ENCODE measurements at regions of chr6 and their contacts with region 1.

Region 1: DNA sequence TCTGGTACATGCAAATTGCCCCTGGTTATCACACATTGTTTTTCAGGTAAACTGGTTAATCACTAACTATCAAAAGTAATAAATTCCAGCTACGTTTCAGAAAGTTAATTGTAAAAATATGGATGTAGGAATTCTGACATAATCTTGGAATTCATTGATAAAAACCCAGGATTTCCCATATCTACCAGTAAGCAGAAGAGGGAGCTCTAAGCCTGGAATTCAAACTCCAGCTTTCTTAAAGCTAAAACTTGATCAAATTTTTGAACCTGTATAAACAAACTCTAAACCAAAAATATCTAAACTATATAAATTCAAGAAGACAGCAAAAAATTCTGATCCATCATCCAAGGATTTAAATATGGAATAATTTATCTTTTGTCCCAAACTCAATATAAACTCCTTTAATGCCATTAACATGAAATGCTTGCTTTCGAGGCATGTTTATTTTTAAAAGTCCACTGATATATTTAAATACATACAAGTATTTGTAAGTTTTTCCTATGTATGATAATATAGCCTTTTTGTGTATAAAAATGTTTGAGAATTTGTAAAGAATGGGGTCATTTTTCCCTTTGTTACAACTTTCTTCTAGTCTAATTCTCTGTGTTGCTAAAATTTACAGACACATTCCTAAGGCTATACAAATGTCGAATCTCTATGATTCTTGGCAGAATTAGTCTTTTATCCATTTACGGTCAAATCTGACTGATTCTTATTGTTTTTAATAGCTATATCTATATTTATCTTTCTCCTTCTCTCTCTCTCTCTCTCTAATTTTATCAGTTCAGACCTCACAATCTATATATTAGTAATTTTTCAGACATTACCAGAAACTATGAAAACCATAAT is 91.4 kb upstream of the RNF217 start:
- DNase-seq: no peak
- ATAC-seq: no peak

Region 2: DNA sequence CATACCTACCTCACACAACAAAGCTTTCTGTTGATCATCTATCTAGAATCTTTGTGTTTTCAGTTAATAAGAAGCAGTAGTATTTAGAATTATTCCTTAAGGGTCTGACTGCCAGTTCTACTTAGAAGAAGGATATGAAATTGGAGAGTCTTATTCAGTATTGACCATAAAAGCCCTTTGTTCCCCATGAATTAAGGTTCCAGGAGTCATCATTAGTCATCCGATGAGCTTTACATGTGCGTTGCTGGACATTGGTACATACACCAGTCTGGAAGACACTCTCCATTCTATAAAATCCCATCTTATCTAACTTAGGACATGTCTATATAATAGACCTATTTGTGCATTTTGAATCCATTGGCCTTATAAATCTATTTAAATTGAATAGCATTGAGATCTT is 57.0 kb after region 1 on chr6:
- intact Hi-C with region 1: no loop called
- DNase-seq: no peak
- ATAC-seq: no peak

Region 3: GRCh38 chr6:125114248-125114858 is 243.5 kb after region 1 on chr6:
- intact Hi-C with region 1: loop called (anchors 2 kb)
- DNase-seq: no peak
- ATAC-seq: peak; percentile 53

Region 4: GRCh38 chr6:125201961-125202591 is 331.2 kb after region 1 on chr6:
- intact Hi-C with region 1: no loop called
- DNase-seq: peak; percentile 75
- ATAC-seq: no peak